ENCODE measurements at regions of chr4 and their contacts with region 1.

Region 1: GRCh38 chr4:14787894-14788293 is 214.4 kb upstream of the CPEB2 start:
- DNase-seq: peak; percentile 41
- H3K4me3 Mint-ChIP-seq: no peak overlapping the region
- H3K27ac Mint-ChIP-seq: no peak overlapping the region
- H3K4me1 Mint-ChIP-seq: peaks cover 21% of the 10 kb centered on the region
- H3K27me3 Mint-ChIP-seq: peaks cover 33% of the 10 kb centered on the region

Region 2: DNA sequence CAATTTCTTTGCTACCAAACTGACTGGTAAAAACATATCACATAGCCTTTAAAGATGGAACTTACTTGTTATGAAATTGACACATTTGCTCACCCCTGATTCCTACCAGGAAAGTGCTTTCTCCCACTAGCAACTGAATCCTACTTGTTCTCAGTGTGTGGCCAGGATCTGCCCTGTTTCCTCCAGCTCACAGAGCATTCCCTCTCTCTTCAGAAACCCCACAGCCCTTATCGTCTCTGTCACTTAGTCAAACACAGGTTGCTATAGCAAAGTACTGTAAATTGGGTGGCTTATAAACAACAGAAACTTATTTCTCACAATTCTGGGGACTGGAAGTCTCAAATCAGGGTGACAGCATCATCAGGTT is 895.2 kb before region 1 on chr4:
- CTCF ChIA-PET with region 1: no interaction called
- intact Hi-C with region 1: loop called (anchors 2 kb)
- DNase-seq: no peak
- H3K4me3 Mint-ChIP-seq: no peak overlapping the region
- H3K27ac Mint-ChIP-seq: peak overlapping the region; percentile 55
- H3K4me1 Mint-ChIP-seq: peaks cover 17% of the 10 kb centered on the region
- H3K27me3 Mint-ChIP-seq: peaks cover 17% of the 10 kb centered on the region

Region 3: DNA sequence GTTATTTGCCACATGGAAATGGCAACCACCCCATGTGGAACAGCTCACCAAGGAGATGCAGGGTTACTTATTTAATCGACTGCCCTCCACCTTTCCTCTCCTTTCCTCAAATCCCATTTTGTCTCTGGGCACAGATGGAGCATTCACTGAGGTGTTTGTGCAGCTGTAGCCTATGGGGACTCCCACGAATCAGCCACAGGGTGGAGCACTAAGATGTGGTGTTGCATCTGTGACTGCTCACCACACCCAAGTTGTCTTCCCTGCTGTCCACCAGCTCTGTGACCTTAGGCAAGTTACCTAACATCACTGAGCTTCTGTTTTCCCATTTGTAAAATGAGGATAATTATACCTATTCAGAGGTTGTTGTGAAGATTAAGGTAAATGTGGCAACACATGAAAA is 38.0 kb before region 1 on chr4:
- CTCF ChIA-PET with region 1: no interaction called
- intact Hi-C with region 1: loop called (anchors 1 kb)
- DNase-seq: peak; percentile 50
- H3K4me3 Mint-ChIP-seq: no peak overlapping the region
- H3K27ac Mint-ChIP-seq: no peak overlapping the region
- H3K4me1 Mint-ChIP-seq: no peaks in the 10 kb centered on the region
- H3K27me3 Mint-ChIP-seq: peaks cover 7% of the 10 kb centered on the region

Region 4: GRCh38 chr4:14835708-14836425 is 48.0 kb after region 1 on chr4:
- CTCF ChIA-PET with region 1: no interaction called
- intact Hi-C with region 1: no loop called
- DNase-seq: no peak
- H3K4me3 Mint-ChIP-seq: no peak overlapping the region
- H3K27ac Mint-ChIP-seq: no peak overlapping the region
- H3K4me1 Mint-ChIP-seq: no peaks in the 10 kb centered on the region
- H3K27me3 Mint-ChIP-seq: no peaks in the 10 kb centered on the region

Region 5: DNA sequence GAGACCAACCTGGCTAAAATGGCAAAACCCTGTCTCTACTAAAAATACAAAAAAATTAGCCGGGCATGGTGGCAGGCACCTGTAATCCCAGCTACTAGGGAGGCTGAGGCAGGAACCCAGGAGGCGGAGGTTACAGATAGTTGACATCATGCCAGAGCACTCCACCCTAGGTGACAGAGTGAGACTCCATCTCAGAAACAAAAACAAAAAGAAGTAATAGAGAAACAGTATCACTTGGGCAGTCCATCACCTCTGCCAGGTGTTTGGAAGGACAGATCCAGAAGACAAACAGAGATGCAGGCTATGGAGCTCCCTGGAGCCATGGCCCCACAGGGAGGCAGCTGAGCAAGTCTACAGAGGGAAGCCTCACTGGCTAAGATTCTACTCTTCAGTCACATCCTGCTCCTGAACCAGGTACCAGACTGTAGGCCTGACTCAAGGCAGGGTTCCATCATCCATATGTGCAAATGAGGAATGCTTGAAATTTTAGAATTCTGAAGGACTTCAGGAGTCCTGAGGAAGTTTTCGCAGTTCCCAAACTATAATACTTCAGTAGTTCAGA is 132.9 kb after region 1 on chr4:
- CTCF ChIA-PET with region 1: no interaction called
- intact Hi-C with region 1: loop called (anchors 2 kb)
- DNase-seq: peak; percentile 35
- H3K4me3 Mint-ChIP-seq: no peak overlapping the region
- H3K27ac Mint-ChIP-seq: no peak overlapping the region
- H3K4me1 Mint-ChIP-seq: no peaks in the 10 kb centered on the region
- H3K27me3 Mint-ChIP-seq: peaks cover 9% of the 10 kb centered on the region

Region 6: GRCh38 chr4:15182600-15183220 is 394.8 kb after region 1 on chr4:
- CTCF ChIA-PET with region 1: no interaction called
- intact Hi-C with region 1: loop called (anchors 10 kb)
- DNase-seq: peak; percentile 56
- H3K4me3 Mint-ChIP-seq: no peak overlapping the region
- H3K27ac Mint-ChIP-seq: no peak overlapping the region
- H3K4me1 Mint-ChIP-seq: peaks cover 25% of the 10 kb centered on the region
- H3K27me3 Mint-ChIP-seq: no peaks in the 10 kb centered on the region

Measured in activated naive CD4-positive, alpha-beta T cell treated with anti-CD3 and anti-CD28 coated beads for 36 hours (primary cell).